Activated T-helper 1 cell treated with anti-CD3 and anti-CD28 coated beads, Interleukin-12 subunit alpha, Interleukin-12 subunit beta, Interleukin-2, Interleukin-4 antibody, amounts not matched to agents 30 ng/mL and 10 ng/mL and 1 ng/mL, durations not matched to agents 14 hours and 24 hours and 36 hours (primary cell): ENCODE measurements at regions of chr20 and their contacts with region 1.

Region 1: DNA sequence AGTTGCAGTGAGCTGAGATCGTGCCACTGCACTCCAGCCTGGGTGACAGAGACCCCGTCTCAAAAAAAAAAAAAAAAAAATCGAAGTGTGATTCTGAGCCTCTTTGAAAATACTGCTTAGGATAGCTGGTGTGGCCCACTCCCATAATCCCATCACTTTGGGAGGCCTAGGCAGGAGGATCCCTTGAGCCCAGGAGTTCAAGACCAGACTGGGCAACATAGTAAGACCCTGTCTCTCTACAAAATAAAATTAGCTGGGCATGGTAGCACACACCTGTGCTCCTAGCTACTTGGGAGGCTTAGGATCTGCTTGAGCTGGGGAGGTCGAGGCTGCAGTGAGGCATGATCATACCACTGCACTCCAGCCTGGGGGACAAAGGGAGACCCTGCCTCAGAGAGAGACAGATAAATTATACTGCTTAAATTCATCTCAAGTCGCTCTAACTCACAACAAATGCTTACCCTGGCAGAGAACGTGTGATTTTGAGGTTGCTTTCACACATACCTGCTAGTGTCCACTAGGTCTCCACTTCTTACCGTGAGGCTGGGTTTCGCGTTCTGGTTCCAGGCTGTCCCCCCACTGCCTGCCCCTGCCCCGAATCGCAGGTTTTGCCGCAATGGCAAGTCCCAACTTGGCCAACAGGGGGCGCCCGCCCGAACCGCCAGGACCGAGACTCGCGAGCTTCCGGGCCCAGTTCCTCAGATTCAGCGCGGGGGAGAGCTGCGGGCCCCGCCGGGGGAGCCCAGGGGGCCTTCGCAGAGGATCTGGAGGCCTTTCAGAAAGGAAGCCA is 12.3 kb upstream of the TMC2 start:
- DNase-seq: peak; percentile 87
- H3K4me3 Mint-ChIP-seq: peak overlapping the region; percentile 85
- H3K27ac Mint-ChIP-seq: peak overlapping the region; percentile 87
- H3K4me1 Mint-ChIP-seq: peaks cover 26% of the 10 kb centered on the region
- H3K27me3 Mint-ChIP-seq: peaks cover 7% of the 10 kb centered on the region

Region 2: DNA sequence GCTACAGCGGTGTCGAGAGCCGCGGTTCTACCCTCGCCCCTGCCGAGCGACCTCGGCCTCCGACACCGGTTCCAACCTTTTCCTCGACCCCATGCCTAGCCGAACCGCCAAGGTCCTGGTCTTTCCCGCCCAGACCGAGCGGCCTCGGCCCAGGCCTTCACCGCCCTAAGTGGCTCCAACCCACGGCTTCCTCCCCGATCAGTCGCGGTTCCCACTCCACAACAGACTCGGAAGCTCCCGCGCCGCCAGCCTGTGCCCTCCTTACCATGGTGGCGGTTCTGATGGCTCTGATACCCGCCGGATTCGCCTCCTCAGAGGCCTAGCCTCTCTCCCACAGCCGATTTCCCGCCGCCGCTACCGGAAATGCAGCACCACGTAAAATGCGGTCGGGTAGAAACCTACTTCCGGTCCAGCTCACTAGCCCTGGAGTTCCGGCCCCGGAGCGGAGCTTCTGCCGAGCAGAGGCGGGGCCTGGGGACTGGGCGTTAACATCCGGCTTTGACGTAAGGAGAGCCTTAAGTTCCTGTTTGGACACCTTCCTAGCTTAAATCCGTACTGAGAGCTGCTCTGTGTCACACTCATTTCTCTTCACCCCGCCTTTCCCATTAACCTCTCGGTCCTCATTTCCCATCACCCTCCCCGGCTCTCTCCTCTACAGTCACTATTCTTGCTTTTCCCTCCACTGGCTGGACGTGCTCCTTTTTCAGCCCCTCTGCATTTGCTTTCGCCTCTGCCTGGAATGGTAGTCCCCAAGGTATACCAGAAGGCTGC is 53.5 kb before region 1 on chr20 and contains the start of gene SNRPB:
- intact Hi-C with region 1: loop called (anchors 1 kb)
- DNase-seq: peak; percentile 96
- H3K4me3 Mint-ChIP-seq: peak within 1 kb of the TSS; percentile 99
- H3K27ac Mint-ChIP-seq: peak within 1 kb of the TSS; percentile 97
- H3K4me1 Mint-ChIP-seq: peaks cover 58% of the 10 kb centered on the region
- H3K27me3 Mint-ChIP-seq: no peaks in the 10 kb centered on the region
- total RNA-seq, gene SNRPB: 533 and 548 TPM in 2 replicates

Region 3: GRCh38 chr20:2508631-2509467 is 15.3 kb before region 1 on chr20 and contains the start of gene ZNF343:
- intact Hi-C with region 1: loop called (anchors 1 kb)
- DNase-seq: peak; percentile 74
- H3K4me3 Mint-ChIP-seq: peak within 1 kb of the TSS; percentile 98
- H3K27ac Mint-ChIP-seq: peak within 1 kb of the TSS; percentile 99
- H3K4me1 Mint-ChIP-seq: peaks cover 18% of the 10 kb centered on the region
- H3K27me3 Mint-ChIP-seq: peaks cover 19% of the 10 kb centered on the region
- total RNA-seq, gene ZNF343: 18.2 and 21.6 TPM in 2 replicates

Region 4: DNA sequence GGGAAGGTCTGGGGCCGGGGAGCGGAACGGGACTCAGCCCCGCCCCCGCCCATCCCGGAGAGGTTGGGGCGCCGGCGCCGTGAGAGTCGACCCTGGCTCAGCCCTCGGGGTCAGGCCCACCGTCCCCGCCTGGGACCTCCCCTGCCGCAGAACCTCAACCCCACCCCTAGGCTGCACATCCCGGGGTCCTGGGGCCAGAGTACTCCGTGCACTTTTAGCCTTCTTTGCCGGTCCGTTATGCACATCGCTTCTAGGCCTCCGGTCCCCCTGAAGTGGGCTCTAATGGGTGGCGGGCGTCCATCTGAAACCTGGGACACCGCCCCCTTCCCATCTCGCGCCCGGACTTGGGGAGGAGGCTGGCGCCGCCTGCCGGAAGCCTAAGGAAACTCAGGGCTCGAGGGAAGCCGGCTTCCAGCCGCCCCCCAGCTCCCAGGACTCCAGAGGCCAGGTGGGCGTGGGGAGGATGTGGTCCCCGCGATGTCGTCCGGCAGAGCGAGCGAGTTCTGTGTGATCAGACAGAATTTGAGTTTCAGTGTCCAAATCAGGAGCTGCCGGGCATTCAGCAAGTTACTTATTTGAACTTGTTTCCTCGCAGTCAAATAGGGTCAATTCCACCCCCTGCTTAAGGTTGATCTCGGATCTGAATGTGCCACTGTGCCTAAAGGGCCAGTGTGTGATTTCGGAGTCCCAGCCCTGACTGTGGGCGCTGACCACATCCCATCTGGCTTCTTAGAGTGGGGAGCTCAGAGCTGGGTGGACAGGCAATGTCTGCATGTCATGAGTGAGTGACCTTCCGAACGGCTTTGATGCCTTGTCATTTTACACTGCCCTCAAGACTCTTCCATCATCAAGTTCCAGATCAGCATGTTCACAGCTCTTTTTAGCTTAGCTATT is 228.7 kb after region 1 on chr20:
- intact Hi-C with region 1: loop called (anchors 5 kb)
- DNase-seq: no peak
- H3K4me3 Mint-ChIP-seq: peak overlapping the region; percentile 79
- H3K27ac Mint-ChIP-seq: no peak overlapping the region
- H3K4me1 Mint-ChIP-seq: peaks cover 22% of the 10 kb centered on the region
- H3K27me3 Mint-ChIP-seq: peaks cover 43% of the 10 kb centered on the region

Region 5: DNA sequence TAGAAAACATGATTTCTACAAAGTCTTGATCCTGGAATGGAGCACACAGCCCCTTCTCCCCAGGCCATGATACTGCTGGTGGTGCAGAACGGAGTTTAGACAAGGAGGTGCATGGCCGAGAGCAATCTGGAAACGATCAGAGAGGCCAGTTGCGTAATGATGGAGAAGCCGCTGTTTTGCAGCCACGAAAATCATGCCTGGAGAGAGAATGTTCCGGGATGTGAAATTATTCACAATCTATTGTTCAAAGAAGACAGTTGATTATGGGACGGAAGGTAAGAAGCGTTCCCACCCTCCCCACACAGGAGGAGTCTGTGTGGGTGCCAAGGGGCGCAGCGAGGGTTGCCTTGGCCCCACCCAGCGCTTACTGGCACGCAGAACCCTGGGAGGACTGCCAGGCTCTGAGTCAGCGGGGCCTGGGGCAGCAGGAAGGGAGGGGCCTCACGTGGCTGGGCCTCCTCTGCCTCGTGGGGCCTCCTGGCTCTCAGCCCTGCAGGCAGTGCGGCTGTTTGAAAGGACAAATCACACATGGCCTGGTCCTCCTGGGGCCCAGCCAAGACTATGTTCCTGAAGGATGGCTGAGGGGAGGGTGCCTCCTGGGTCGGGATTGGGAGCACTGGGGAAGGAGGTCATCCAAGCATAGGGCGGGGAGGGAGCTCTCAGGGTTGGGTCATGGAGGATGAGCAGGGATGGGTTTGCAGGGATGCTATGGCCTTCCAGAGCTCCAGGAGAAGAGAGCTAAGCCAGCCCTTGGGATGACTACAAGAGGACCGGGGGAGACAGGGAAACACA is 1287.5 kb after region 1 on chr20:
- intact Hi-C with region 1: loop called (anchors 10 kb)
- DNase-seq: peak; percentile 77
- H3K4me3 Mint-ChIP-seq: peak overlapping the region; percentile 75
- H3K27ac Mint-ChIP-seq: peak overlapping the region; percentile 92
- H3K4me1 Mint-ChIP-seq: peaks cover 65% of the 10 kb centered on the region
- H3K27me3 Mint-ChIP-seq: no peaks in the 10 kb centered on the region